Natural killer cell (primary cell): ENCODE measurements at regions of chr20 and their contacts with region 1.

Region 1: GRCh38 chr20:38875175-38875993 is 50.8 kb upstream of the FAM83D start:
- DNase-seq: peak; percentile 75 to 88
- ATAC-seq: peak; percentile 49 to 73 (median 66)
- H3K4me3 ChIP-seq: peak overlapping the region; percentile 20
- H3K4me3 Mint-ChIP-seq: peak overlapping the region; percentile 87
- H3K27ac ChIP-seq: peak overlapping the region; percentile 94
- H3K27ac Mint-ChIP-seq: peak overlapping the region; percentile 99
- H3K4me1 ChIP-seq: peaks cover 85% of the 10 kb centered on the region
- H3K4me1 Mint-ChIP-seq: peaks cover 88 to 93% of the 10 kb centered on the region in 2 donors
- H3K27me3 ChIP-seq: no peaks in the 10 kb centered on the region
- H3K27me3 Mint-ChIP-seq: no peaks in the 10 kb centered on the region
- CTCF ChIP-seq: no peak

Region 2: GRCh38 chr20:38723017-38723847 is 152.2 kb before region 1 on chr20:
- intact Hi-C with region 1: no loop called
- DNase-seq: peak in 1 of 2 donors; percentile 24
- ATAC-seq: no peak
- H3K4me3 ChIP-seq: no peak overlapping the region
- H3K4me3 Mint-ChIP-seq: peak overlapping the region; percentile 19
- H3K27ac ChIP-seq: no peak overlapping the region
- H3K27ac Mint-ChIP-seq: no peak overlapping the region
- H3K4me1 ChIP-seq: peaks cover 51% of the 10 kb centered on the region
- H3K4me1 Mint-ChIP-seq: peaks cover 28 to 30% of the 10 kb centered on the region in 2 donors
- H3K27me3 ChIP-seq: peaks cover 61% of the 10 kb centered on the region
- H3K27me3 Mint-ChIP-seq: peaks cover 77 to 84% of the 10 kb centered on the region in 2 donors
- CTCF ChIP-seq: no peak

Region 3: GRCh38 chr20:38776363-38776762 is 99.0 kb before region 1 on chr20:
- intact Hi-C with region 1: loop called (anchors 1 kb)
- DNase-seq: peak; percentile 21 to 54
- ATAC-seq: peak; percentile 71 to 91 (median 83)
- H3K4me3 ChIP-seq: peak overlapping the region; percentile 2
- H3K4me3 Mint-ChIP-seq: peak overlapping the region; percentile 79
- H3K27ac ChIP-seq: peak overlapping the region; percentile 64
- H3K27ac Mint-ChIP-seq: peak overlapping the region; percentile 86 to 90
- H3K4me1 ChIP-seq: peaks cover 14% of the 10 kb centered on the region
- H3K4me1 Mint-ChIP-seq: peaks cover 16 to 23% of the 10 kb centered on the region in 2 donors
- H3K27me3 ChIP-seq: no peaks in the 10 kb centered on the region
- H3K27me3 Mint-ChIP-seq: no peaks in the 10 kb centered on the region
- CTCF ChIP-seq: no peak

Region 4: DNA sequence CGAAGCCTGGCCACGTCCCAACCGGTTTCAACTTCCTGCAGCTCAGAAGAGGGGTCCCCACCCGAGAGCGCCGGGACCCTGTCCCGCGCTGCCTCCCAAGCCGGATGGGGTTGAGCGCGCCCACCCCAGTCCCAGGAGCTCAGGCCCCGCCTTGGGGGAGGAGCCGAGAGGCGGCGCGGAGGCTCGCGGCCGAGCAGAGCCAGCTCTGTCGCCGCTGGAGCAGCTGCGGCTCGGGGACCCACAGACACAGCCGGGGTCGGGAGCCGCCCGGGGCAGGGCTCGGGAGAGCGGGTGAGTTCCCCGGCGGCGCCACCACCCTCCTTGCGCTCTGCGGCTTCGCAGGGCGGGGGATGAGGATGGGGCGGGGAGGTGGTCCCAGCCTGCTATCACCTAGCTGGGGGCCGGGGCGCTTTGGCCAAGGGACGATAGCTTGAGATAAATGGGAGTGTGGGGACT is 69.9 kb before region 1 on chr20 and contains the start of gene PPP1R16B:
- intact Hi-C with region 1: loop called (anchors 1 kb)
- DNase-seq: peak; percentile 77 to 88
- ATAC-seq: peak; percentile 73 to 85 (median 74)
- H3K4me3 ChIP-seq: peak within 1 kb of the TSS; percentile 96
- H3K4me3 Mint-ChIP-seq: peak within 1 kb of the TSS; percentile 95
- H3K27ac ChIP-seq: peak within 1 kb of the TSS; percentile 99
- H3K27ac Mint-ChIP-seq: peak within 1 kb of the TSS; percentile 86 to 97
- H3K4me1 ChIP-seq: peaks cover 54% of the 10 kb centered on the region
- H3K4me1 Mint-ChIP-seq: peaks cover 56% of the 10 kb centered on the region in 2 donors
- H3K27me3 ChIP-seq: no peaks in the 10 kb centered on the region
- H3K27me3 Mint-ChIP-seq: no peaks in the 10 kb centered on the region
- CTCF ChIP-seq: no peak
- total RNA-seq, gene PPP1R16B: 52.0 to 62.3 (median 53.7) TPM

Region 5: DNA sequence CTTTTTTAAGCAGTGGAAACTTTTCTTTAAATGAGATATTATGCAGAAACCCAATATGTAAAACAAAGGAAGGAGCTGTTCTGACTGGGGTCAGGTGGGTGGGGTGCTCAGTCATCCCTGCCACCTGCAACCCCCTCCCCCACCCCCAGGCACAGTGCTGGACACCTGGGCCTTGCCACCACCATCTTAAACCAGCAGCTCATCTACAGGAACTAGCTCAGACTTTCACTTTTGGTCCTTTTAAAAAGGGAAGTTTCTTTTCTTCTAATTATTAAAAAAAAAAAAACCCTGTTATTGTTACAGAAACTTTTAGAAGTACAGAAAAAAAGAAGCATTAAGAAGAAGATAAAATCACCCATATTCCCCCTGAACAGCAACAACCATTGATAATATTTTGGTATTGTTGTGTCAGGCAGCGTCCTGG is 32.8 kb before region 1 on chr20:
- intact Hi-C with region 1: loop called (anchors 1 kb)
- DNase-seq: peak in 1 of 2 donors; percentile 69
- ATAC-seq: peak; percentile 17 to 43 (median 37)
- H3K4me3 ChIP-seq: no peak overlapping the region
- H3K4me3 Mint-ChIP-seq: peak overlapping the region; percentile 70
- H3K27ac ChIP-seq: peak overlapping the region; percentile 73
- H3K27ac Mint-ChIP-seq: peak overlapping the region; percentile 89 to 92
- H3K4me1 ChIP-seq: peaks cover 40% of the 10 kb centered on the region
- H3K4me1 Mint-ChIP-seq: peaks cover 64 to 67% of the 10 kb centered on the region in 2 donors
- H3K27me3 ChIP-seq: no peaks in the 10 kb centered on the region
- H3K27me3 Mint-ChIP-seq: no peaks in the 10 kb centered on the region
- CTCF ChIP-seq: no peak

Region 6: GRCh38 chr20:38863024-38863851 is 12.1 kb before region 1 on chr20:
- intact Hi-C with region 1: loop called (anchors 1 kb)
- DNase-seq: peak; percentile 34 to 86
- ATAC-seq: peak; percentile 51 to 75 (median 69)
- H3K4me3 ChIP-seq: no peak overlapping the region
- H3K4me3 Mint-ChIP-seq: no peak overlapping the region
- H3K27ac ChIP-seq: peak overlapping the region; percentile 77
- H3K27ac Mint-ChIP-seq: peak overlapping the region; percentile 74 to 78
- H3K4me1 ChIP-seq: peaks cover 82% of the 10 kb centered on the region
- H3K4me1 Mint-ChIP-seq: peaks cover 52 to 72% of the 10 kb centered on the region in 2 donors
- H3K27me3 ChIP-seq: no peaks in the 10 kb centered on the region
- H3K27me3 Mint-ChIP-seq: no peaks in the 10 kb centered on the region
- CTCF ChIP-seq: no peak

Region 7: GRCh38 chr20:38893565-38894090 is 18.2 kb after region 1 on chr20:
- intact Hi-C with region 1: loop called (anchors 1 kb)
- DNase-seq: peak; percentile 81 to 91
- ATAC-seq: peak; percentile 88 to 92 (median 90)
- H3K4me3 ChIP-seq: no peak overlapping the region
- H3K4me3 Mint-ChIP-seq: peak overlapping the region; percentile 55
- H3K27ac ChIP-seq: peak overlapping the region; percentile 75
- H3K27ac Mint-ChIP-seq: peak overlapping the region; percentile 88 to 94
- H3K4me1 ChIP-seq: peaks cover 32% of the 10 kb centered on the region
- H3K4me1 Mint-ChIP-seq: peaks cover 36 to 44% of the 10 kb centered on the region in 2 donors
- H3K27me3 ChIP-seq: no peaks in the 10 kb centered on the region
- H3K27me3 Mint-ChIP-seq: no peaks in the 10 kb centered on the region
- CTCF ChIP-seq: peak; percentile 87